Cardiac septum (tissue), 1 donor: ENCODE measurements at regions of chr10 and their contacts with region 1.

Region 1: DNA sequence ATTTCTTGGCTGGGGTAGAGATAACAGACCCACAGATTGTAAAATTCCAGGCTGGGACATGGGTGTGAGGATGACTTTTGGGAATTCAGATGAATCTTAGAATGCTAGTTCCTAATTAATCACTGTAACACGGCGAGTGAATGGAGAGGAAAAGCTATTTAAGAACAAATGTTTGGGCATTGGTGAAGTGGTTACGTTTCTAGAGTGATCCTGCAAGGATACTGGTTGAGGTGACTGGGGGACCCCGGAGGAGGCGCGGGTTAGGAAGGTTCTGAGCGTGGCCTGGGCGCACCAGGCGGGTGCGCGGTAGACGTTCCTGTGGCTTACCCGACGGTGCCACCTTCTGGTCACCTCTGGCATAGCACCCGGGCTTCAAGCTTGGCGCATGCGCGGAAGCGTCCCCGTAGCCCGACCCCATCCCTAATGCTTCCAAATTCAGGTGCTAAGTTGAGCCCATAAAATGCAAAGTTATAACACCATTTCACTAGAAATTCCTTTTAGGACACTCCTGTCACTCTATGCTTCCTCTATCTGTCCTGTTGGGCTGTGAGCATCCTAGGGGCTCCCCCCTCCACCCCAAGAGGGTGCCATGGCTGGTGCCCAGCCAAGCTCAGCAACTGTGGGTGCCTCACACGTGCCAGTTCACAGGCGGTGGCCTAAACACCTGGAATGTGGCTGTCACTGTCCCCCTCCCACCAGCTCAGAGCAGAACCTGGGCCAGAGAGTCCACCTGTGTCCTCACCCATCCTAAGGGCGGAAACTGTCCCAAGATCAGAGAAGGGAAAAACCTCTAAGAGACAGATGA is 104.5 kb downstream of the PTPRE start:
- DNase-seq: peak; percentile 95

Region 2: GRCh38 chr10:127715782-127716378 is 295.5 kb before region 1 on chr10:
- intact Hi-C with region 1: loop called (anchors 10 kb)
- DNase-seq: no peak

Region 3: GRCh38 chr10:127968027-127968441 is 43.3 kb before region 1 on chr10:
- intact Hi-C with region 1: loop called (anchors 5 kb)
- DNase-seq: no peak